ENCODE measurements at regions of chr17 and their contacts with region 1.

Region 1: GRCh38 chr17:43418441-43419374 is 19.9 kb downstream of the ARL4D start:
- DNase-seq: peak; percentile 88 to 97
- ATAC-seq: peak; percentile 98 to 99
- H3K4me3 ChIP-seq: no peak overlapping the region
- H3K27ac ChIP-seq: peak overlapping the region; percentile 81 to 85
- H3K4me1 ChIP-seq: peaks cover 36% of the 10 kb centered on the region
- CTCF ChIP-seq: 0 out of 3 replicates have a peak, but pooled peaks have one; percentile 8
- EP300 ChIP-seq: no peak
- POLR2A ChIP-seq: peak; percentile 37
- RAD21 ChIP-seq: peak; percentile 47 to 51; a peak in 4 of 5 replicates

Region 2: GRCh38 chr17:43151880-43152456 is 266.7 kb before region 1 on chr17:
- CTCF ChIA-PET with region 1: no interaction called
- POLR2A ChIA-PET with region 1: no interaction called
- DNase-seq: no peak
- ATAC-seq: no peak
- H3K4me3 ChIP-seq: no peak overlapping the region
- H3K27ac ChIP-seq: no peak overlapping the region
- H3K4me1 ChIP-seq: no peaks in the 10 kb centered on the region
- CTCF ChIP-seq: no peak
- EP300 ChIP-seq: no peak
- POLR2A ChIP-seq: no peak
- RAD21 ChIP-seq: no peak

Region 3: GRCh38 chr17:43367737-43368242 is 50.9 kb before region 1 on chr17:
- CTCF ChIA-PET with region 1: no interaction called
- POLR2A ChIA-PET with region 1: interaction called, 18 read pairs
- DNase-seq: peak; percentile 90 to 92
- ATAC-seq: peak; percentile 70 to 74
- H3K4me3 ChIP-seq: peak overlapping the region; percentile 44; the same call in 2 of the 3 replicates
- H3K27ac ChIP-seq: peak overlapping the region; percentile 94
- H3K4me1 ChIP-seq: peaks cover 22% of the 10 kb centered on the region
- CTCF ChIP-seq: no peak
- EP300 ChIP-seq: no peak
- POLR2A ChIP-seq: peak; percentile 97
- RAD21 ChIP-seq: no peak; a peak in 1 of 5 replicates

Region 4: GRCh38 chr17:43400943-43401692 is 17.6 kb before region 1 on chr17:
- CTCF ChIA-PET with region 1: interaction called, 386 read pairs
- POLR2A ChIA-PET with region 1: interaction called, 38 read pairs
- DNase-seq: peak; percentile 75 to 81
- ATAC-seq: peak; percentile 65 to 66
- H3K4me3 ChIP-seq: peak overlapping the region; percentile 71; the same call in 2 of the 3 replicates
- H3K27ac ChIP-seq: peak overlapping the region; percentile 52 to 95
- H3K4me1 ChIP-seq: peaks cover 35% of the 10 kb centered on the region
- CTCF ChIP-seq: no peak
- EP300 ChIP-seq: no peak
- POLR2A ChIP-seq: no peak
- RAD21 ChIP-seq: no peak

Region 5: GRCh38 chr17:43406676-43407645 is 11.7 kb before region 1 on chr17:
- CTCF ChIA-PET with region 1: interaction called, 386 read pairs
- POLR2A ChIA-PET with region 1: interaction called, 15 read pairs
- DNase-seq: peak in 1 of 2 experiments; percentile 72
- ATAC-seq: peak; percentile 67 to 81
- H3K4me3 ChIP-seq: no peak overlapping the region
- H3K27ac ChIP-seq: peak overlapping the region; percentile 79 to 86
- H3K4me1 ChIP-seq: peaks cover 55% of the 10 kb centered on the region
- CTCF ChIP-seq: no peak
- EP300 ChIP-seq: no peak
- POLR2A ChIP-seq: no peak
- RAD21 ChIP-seq: no peak